Calu3 (cell line): ENCODE measurements at regions of chr2 and their contacts with region 1.

Region 1: DNA sequence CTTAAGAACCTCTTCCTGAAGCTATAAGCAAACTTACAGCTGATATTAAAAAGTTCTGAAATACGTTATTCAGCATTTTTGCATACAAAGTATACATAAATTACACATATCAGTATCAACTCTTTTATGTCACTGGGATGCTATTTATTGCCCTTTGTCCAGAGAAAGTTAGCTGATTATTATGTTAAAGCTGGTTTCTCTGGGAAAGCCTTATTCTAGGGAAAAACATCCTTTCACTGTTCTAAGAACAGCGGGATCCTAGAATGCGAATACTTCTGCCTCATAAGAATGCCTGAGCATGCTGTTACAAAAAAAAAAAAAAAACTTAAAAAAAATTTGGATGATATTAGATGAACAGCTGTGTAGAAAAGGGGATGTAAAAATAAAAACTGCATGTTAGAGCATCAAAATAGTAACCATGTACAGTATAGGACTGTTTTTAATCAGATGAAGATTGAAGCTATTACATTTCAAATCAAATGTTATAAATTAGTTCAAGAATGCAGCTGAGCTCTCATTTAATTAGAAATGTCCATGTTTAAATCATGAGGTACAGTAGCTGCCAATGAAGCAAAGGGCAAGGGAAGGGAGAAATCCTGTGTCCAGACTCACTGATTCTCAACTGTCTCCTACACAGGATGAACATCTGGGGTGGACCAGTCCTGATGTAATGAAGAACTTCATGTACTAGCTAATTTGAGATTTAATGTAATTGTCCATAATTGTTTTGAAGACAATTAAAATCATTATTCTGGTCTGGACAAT is 8.2 kb downstream of the FTCDNL1 start:
- DNase-seq: no peak
- H3K4me3 Mint-ChIP-seq: no peak overlapping the region
- H3K27ac Mint-ChIP-seq: no peak overlapping the region
- H3K4me1 Mint-ChIP-seq: peaks cover 17% of the 10 kb centered on the region
- H3K27me3 Mint-ChIP-seq: no peaks in the 10 kb centered on the region
- CTCF ChIP-seq: no peak

Region 2: GRCh38 chr2:199798831-199799580 is 43.8 kb before region 1 on chr2:
- CTCF ChIA-PET with region 1: no interaction called
- intact Hi-C with region 1: loop called (anchors 5 kb)
- DNase-seq: peak; percentile 72
- H3K4me3 Mint-ChIP-seq: peak overlapping the region; percentile 13
- H3K27ac Mint-ChIP-seq: peak overlapping the region; percentile 56
- H3K4me1 Mint-ChIP-seq: peaks cover 19% of the 10 kb centered on the region
- H3K27me3 Mint-ChIP-seq: no peaks in the 10 kb centered on the region
- CTCF ChIP-seq: no peak

Region 3: GRCh38 chr2:200319548-200320337 is 476.9 kb after region 1 on chr2:
- CTCF ChIA-PET with region 1: no interaction called
- intact Hi-C with region 1: no loop called
- DNase-seq: no peak
- H3K4me3 Mint-ChIP-seq: no peak overlapping the region
- H3K27ac Mint-ChIP-seq: peak overlapping the region; percentile 60
- H3K4me1 Mint-ChIP-seq: peaks cover 84% of the 10 kb centered on the region
- H3K27me3 Mint-ChIP-seq: no peaks in the 10 kb centered on the region
- CTCF ChIP-seq: no peak